Right cardiac atrium (tissue), 5 donors: ENCODE measurements at regions of chr15 and their contacts with region 1.

Region 1: GRCh38 chr15:63093486-63094205 is 28.0 kb upstream of the LACTB start:
- DNase-seq: peak; percentile 79 to 89 (median 86)
- ATAC-seq: peak; percentile 91 to 92
- H3K4me3 ChIP-seq: no peak overlapping the region
- H3K27ac ChIP-seq: no peak overlapping the region
- H3K4me1 ChIP-seq: peaks cover 7% of the 10 kb centered on the region
- H3K27me3 ChIP-seq: no peaks in the 10 kb centered on the region

Region 2: DNA sequence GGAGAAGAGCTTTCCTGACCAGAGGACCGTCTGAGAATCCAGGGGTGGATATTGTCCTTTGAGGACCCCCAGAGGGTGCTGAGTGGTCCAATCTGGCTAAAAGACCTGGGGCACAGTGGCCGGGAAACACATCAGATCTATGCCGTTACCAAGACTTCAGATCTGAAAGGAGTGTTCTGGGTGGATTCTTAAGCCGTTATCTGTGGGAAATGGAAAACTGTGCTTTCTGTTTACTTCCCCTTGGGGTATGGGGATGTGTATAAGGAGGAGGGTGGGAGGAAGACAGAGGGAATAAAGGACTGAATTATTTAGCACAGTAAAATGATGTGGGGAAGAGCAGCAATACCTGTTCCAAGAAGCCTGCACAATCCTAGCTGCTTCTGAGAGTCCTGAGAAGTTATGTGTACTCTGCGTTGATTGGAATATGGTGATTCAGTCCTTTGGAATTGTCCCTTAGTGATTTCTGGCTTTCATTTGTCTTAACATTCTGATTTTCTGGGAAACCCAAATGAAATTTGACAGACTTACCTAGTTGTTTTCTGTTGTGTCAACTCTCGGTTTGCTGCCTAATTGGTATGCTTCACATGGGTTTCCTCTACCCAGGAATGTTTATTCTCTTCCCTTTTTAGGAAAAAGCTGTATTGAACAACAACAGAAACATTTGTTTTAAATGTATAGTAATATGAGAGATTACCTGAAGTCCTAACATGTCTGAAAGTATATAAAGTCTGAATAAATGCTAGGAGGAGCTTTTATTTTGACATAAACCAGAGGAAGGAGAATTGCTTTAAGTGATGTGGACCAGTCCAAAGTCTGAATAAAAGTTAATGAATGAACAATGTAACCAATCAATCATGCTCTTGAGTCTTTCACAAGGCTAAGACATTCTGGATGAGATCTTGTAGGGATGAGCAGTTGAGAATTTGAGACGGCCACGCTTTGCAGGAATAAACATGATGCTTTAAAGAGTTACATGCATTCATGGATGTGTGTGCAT is 501.5 kb before region 1 on chr15:
- intact Hi-C with region 1: no loop called
- DNase-seq: no peak
- ATAC-seq: peak; percentile 56 to 74
- H3K4me3 ChIP-seq: no peak overlapping the region
- H3K27ac ChIP-seq: no peak overlapping the region
- H3K4me1 ChIP-seq: peaks cover 4% of the 10 kb centered on the region
- H3K27me3 ChIP-seq: no peaks in the 10 kb centered on the region

Region 3: GRCh38 chr15:62782039-62782791 is 311.4 kb before region 1 on chr15:
- intact Hi-C with region 1: loop called in 3 of 4 experiments (anchors 2 to 10 kb)
- DNase-seq: peak; percentile 87 to 90 (median 87)
- ATAC-seq: peak; percentile 92
- H3K4me3 ChIP-seq: no peak overlapping the region
- H3K27ac ChIP-seq: peak overlapping the region; percentile 78
- H3K4me1 ChIP-seq: peaks cover 5% of the 10 kb centered on the region
- H3K27me3 ChIP-seq: no peaks in the 10 kb centered on the region